Esophagus muscularis mucosa (tissue), 4 donors: ENCODE measurements at regions of chr11 and their contacts with region 1.

Region 1: GRCh38 chr11:45371251-45372115 is 85.3 kb upstream of the SYT13 start:
- DNase-seq: no peak
- H3K4me3 ChIP-seq: peak overlapping the region in 1 of 4 donors; percentile 37
- H3K27ac ChIP-seq: no peak overlapping the region
- H3K4me1 ChIP-seq: peaks cover 0 to 13% (median 8%) of the 10 kb centered on the region in 4 donors
- H3K27me3 ChIP-seq: peaks cover 0 to 58% (median 0%) of the 10 kb centered on the region in 4 donors
- CTCF ChIP-seq: peak; percentile 74 to 91 (median 76)
- EP300 ChIP-seq: no peak
- POLR2A ChIP-seq: no peak

Region 2: GRCh38 chr11:44760917-44761550 is 610.4 kb before region 1 on chr11:
- intact Hi-C with region 1: no loop called
- DNase-seq: no peak
- H3K4me3 ChIP-seq: no peak overlapping the region
- H3K27ac ChIP-seq: peak overlapping the region; percentile 84 to 86 (median 86)
- H3K4me1 ChIP-seq: peaks cover 63 to 76% (median 73%) of the 10 kb centered on the region in 4 donors
- H3K27me3 ChIP-seq: no peaks in the 10 kb centered on the region
- CTCF ChIP-seq: peak in 1 of 3 experiments; percentile 9
- EP300 ChIP-seq: no peak
- POLR2A ChIP-seq: no peak

Region 3: GRCh38 chr11:45655347-45655756 is 283.9 kb after region 1 on chr11:
- intact Hi-C with region 1: loop called (anchors 5 kb)
- DNase-seq: no peak
- H3K4me3 ChIP-seq: no peak overlapping the region
- H3K27ac ChIP-seq: no peak overlapping the region
- H3K4me1 ChIP-seq: peaks cover 18 to 26% (median 24%) of the 10 kb centered on the region in 4 donors
- H3K27me3 ChIP-seq: peaks cover 0 to 59% (median 11%) of the 10 kb centered on the region in 4 donors
- CTCF ChIP-seq: peak; percentile 70 to 98 (median 77)
- EP300 ChIP-seq: no peak
- POLR2A ChIP-seq: no peak

Region 4: DNA sequence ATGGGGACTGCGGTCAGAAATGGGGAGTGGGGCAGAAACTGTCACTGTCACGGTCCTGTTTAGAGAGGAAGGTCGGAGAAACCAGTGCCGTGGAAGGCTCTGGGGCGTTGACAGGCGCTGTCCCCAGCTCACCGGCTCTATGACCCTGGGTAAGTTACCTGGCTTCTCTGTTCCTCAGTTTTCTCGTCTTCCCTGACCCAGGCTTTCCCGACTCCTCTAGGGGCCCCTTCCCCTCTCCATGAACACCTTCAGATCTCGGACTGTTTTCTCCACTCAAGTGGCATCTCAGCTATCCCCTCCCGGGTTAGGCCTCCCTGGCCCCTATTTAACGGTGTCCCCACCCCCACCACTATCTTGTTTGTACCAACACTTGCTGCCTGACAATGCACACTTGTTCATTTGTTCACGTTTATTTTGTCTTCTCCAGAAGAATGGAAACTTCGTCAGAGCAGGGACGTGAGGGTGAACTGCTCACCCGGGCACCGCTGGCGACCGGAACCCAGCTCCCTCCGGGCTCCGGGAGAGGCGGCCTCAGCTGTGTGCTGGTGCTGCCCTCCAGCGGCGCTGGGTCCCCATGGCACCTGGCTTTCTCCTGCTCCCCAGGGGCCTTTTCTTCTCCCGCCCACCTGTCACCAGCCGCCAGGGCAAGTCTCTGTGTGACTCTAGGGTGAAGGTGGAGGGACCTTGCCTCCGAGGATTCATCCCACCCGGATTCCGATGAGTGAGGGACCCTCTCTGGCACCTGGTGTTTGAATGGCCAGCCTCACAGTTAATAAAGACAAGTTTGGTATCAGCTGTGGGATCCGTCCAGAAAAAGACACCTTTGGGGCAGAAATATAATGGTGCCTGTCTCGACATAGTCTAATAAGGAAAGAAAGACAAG is 400.3 kb after region 1 on chr11:
- intact Hi-C with region 1: loop called (anchors 2 kb)
- DNase-seq: peak; percentile 95
- H3K4me3 ChIP-seq: peak overlapping the region; percentile 58 to 65 (median 60)
- H3K27ac ChIP-seq: peak overlapping the region; percentile 60 to 77 (median 74)
- H3K4me1 ChIP-seq: peaks cover 4 to 14% (median 7%) of the 10 kb centered on the region in 4 donors
- H3K27me3 ChIP-seq: no peaks in the 10 kb centered on the region
- CTCF ChIP-seq: peak; percentile 92 to 94 (median 92)
- EP300 ChIP-seq: no peak
- POLR2A ChIP-seq: no peak